Right cardiac atrium (tissue), 5 donors: ENCODE measurements at regions of chr9 and their contacts with region 1.

Region 1: DNA sequence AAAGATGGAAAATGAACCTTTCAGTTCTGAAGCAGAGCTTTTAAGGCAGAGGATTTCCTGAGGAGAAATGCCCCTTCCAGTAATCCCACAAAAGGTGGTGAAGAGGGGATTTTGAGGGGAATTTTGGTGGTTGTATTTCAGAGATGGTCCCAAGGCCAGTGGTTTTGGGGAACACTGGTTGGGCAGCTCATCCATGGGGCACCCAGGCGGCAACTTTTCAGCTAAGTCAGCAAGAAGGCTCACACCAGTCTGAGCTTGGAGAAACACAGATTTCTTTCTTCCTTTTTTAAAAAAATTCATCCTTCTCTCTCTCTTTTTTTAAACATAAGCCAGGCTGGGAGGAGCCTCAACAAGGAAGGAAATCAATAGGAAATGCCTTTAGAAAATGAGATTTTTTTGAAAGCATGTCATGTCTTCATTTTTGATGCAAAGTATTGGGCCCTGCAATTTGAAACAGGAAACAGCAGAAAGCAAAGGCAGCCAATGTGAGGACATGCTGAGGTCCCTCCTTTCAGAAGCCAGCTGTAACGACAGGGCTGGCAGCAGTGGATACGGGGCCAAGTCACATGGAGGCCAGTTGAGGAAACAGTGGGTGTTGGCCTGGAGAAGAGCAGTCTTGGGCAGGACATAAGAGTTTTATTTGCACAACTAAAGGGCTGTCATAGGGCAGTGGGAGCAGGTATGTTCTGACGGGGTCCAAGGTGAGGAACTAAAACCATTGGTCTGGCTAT is 155.3 kb upstream of the KLF4 start:
- DNase-seq: peak; percentile 67 to 85 (median 81)
- ATAC-seq: peak; percentile 87 to 92
- H3K4me3 ChIP-seq: no peak overlapping the region
- H3K27ac ChIP-seq: no peak overlapping the region
- H3K4me1 ChIP-seq: peaks cover 3% of the 10 kb centered on the region
- H3K27me3 ChIP-seq: no peaks in the 10 kb centered on the region

Region 2: GRCh38 chr9:106859957-106860720 is 784.8 kb before region 1 on chr9:
- intact Hi-C with region 1: no loop called
- DNase-seq: peak; percentile 62 to 76 (median 70)
- ATAC-seq: peak; percentile 23 to 57
- H3K4me3 ChIP-seq: peak overlapping the region; percentile 95
- H3K27ac ChIP-seq: peak overlapping the region; percentile 11
- H3K4me1 ChIP-seq: peaks cover 2% of the 10 kb centered on the region
- H3K27me3 ChIP-seq: no peaks in the 10 kb centered on the region

Region 3: DNA sequence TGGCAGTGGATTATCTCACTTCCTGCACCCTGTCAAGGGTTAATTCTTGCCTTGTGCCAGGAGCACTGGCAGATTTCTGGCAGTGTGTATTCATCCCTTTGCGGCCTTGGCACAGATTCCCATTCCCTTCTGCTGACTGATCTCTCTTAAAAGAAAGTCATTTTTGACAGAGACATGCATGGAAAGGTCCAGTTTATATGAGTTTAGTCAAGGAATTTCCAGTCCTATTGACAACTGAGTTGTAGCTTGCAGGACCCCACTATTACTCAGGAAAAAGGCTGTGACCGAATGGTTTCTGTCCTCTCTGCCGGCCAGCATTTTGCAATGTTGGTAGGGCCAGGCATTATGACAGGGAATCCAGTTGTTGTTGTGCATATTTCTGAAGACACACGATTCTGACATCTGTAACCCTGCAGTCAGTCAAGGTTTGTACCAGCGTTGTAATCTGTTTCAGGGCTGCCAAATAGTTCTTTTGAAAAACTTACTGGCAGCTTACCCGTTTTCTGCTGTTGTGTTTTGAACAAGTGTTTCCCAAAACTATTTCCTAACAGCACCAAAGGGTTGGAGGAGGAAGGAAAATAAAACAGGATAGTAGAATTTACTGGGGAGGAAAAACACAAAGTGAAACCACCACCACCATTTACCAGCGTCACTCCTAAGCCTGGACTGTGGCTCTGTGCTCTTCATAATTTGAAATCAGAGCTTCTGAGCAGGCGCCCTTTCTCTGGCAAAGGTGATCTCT is 88.1 kb after region 1 on chr9:
- intact Hi-C with region 1: loop called in 1 of 4 experiments (anchors 10 kb)
- DNase-seq: peak; percentile 49 to 74 (median 72)
- ATAC-seq: peak; percentile 72 to 75
- H3K4me3 ChIP-seq: peak overlapping the region; percentile 13
- H3K27ac ChIP-seq: peak overlapping the region; percentile 99
- H3K4me1 ChIP-seq: peaks cover 8% of the 10 kb centered on the region
- H3K27me3 ChIP-seq: no peaks in the 10 kb centered on the region